Activated T-helper 2 cell treated with anti-CD3 and anti-CD28 coated beads, Interferon-gamma antibody, Interleukin-2, Interleukin-4, amounts not matched to agents 10 μg/mL and 5 μg/mL and 100 μg/mL, durations not matched to agents 14 hours and 24 hours and 36 hours (primary cell): ENCODE measurements at regions of chr5 and their contacts with region 1.

Region 1: GRCh38 chr5:141234109-141234667 is 11.0 kb upstream of the PCDHB15 start:
- DNase-seq: no peak
- H3K4me3 Mint-ChIP-seq: no peak overlapping the region
- H3K27ac Mint-ChIP-seq: no peak overlapping the region
- H3K4me1 Mint-ChIP-seq: no peaks in the 10 kb centered on the region
- H3K27me3 Mint-ChIP-seq: no peaks in the 10 kb centered on the region

Region 2: DNA sequence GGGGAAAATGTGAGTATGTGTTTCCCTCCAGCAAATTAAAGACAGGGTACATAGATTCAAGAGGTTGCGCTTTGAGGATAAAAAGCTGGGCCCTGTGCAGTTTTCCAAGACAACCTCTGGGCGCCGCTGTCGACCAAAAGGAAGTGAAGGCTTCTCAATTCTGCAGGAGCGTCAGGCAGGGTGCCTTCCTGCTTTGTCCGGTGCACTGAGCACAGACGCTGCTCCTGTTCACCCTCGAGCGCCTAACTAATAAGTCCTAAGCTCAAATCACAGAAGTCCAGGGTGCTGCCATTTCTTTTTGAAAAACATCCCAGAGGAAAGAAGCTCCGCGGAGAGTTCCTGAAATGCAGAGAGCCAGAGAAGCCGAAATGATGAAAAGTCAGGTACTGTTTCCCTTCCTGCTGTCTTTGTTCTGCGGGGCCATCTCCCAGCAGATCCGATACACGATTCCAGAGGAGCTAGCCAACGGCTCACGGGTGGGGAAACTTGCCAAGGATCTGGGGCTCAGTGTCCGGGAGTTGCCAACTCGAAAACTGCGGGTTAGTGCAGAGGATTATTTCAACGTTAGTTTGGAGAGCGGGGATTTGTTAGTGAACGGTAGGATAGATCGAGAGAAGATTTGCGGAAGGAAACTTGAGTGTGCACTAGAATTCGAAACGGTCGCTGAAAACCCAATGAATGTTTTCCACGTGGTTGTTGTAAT is 115.9 kb after region 1 on chr5 and contains the start of gene PCDHGB1:
- intact Hi-C with region 1: loop called (anchors 10 kb)
- DNase-seq: no peak
- H3K4me3 Mint-ChIP-seq: peak within 1 kb of the TSS; percentile 75
- H3K27ac Mint-ChIP-seq: no peak within 1 kb of the TSS
- H3K4me1 Mint-ChIP-seq: peaks cover 7% of the 10 kb centered on the region
- H3K27me3 Mint-ChIP-seq: peaks cover 14% of the 10 kb centered on the region
- total RNA-seq, gene PCDHGB1: 0.16 and 0.48 TPM in 2 replicates

Region 3: GRCh38 chr5:141412854-141413539 is 178.8 kb after region 1 on chr5 and contains the start of gene PCDHGA10:
- intact Hi-C with region 1: loop called (anchors 5 kb)
- DNase-seq: no peak
- H3K4me3 Mint-ChIP-seq: peak within 1 kb of the TSS; percentile 82
- H3K27ac Mint-ChIP-seq: no peak within 1 kb of the TSS
- H3K4me1 Mint-ChIP-seq: peaks cover 18% of the 10 kb centered on the region
- H3K27me3 Mint-ChIP-seq: peaks cover 60% of the 10 kb centered on the region
- total RNA-seq, gene PCDHGA10: 0.21 and 0.34 TPM in 2 replicates